GM13977 (cell line): ENCODE measurements at regions of chr4 and their contacts with region 1.

Region 1: GRCh38 chr4:101724093-101724492 is 66.4 kb upstream of the BANK1 start:
- DNase-seq: no peak
- CTCF ChIP-seq: no peak

Region 2: DNA sequence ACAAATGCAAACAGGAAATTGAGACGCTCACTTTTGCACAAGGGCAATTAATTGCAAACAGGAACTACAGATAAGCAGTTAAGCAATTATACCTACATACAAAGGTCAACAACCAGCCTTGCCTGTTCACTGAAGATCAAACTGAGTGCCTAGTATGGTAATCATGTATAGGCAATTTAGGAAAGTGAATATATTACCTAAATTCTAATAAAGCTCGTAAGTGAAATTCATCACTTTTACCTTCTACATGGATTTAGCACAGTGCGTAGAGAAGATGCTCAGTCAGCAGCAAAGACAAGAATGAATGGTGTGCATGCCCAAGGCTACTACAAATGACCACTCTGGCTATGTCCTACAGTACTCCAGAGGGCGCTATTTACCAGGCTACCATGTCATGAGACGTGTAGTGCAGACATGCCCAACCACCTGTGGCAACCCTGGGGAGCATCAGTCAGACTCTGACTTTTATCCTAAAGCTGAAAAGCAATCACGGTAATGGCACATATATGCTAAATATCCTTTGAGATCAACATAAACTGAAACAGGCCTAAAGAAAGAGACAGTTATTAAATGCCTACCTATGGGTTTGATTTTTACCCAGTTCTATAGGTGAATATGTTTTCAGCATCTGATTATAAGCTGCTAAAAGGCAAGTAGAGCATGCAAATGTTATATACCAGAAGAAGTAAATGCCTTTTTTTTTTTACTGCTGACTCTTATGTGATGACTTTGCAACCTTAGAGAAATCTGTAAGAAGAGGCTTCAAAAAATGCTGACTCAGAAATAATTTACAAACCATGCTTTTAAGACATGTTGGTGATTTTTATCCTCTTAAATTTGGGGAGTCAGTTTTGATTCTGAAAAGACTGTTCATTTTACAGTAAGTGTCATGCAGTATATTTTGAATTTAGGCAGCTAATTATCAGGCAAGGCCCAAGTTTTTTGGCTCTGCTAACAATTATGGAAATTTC is 554.8 kb before region 1 on chr4:
- in situ Hi-C with region 1: loop called (anchors 25 kb)
- DNase-seq: peak; percentile 19
- CTCF ChIP-seq: peak; percentile 84

Region 3: GRCh38 chr4:101953949-101954348 is 229.9 kb after region 1 on chr4:
- in situ Hi-C with region 1: no loop called
- DNase-seq: no peak
- CTCF ChIP-seq: no peak

Region 4: GRCh38 chr4:102362922-102363432 is 638.9 kb after region 1 on chr4:
- in situ Hi-C with region 1: no loop called
- DNase-seq: no peak
- CTCF ChIP-seq: no peak